ENCODE measurements at regions of chr11 and their contacts with region 1.

Region 1: GRCh38 chr11:72352859-72353551 is 81.3 kb downstream of the CLPB start:
- DNase-seq: peak; percentile 20

Region 2: DNA sequence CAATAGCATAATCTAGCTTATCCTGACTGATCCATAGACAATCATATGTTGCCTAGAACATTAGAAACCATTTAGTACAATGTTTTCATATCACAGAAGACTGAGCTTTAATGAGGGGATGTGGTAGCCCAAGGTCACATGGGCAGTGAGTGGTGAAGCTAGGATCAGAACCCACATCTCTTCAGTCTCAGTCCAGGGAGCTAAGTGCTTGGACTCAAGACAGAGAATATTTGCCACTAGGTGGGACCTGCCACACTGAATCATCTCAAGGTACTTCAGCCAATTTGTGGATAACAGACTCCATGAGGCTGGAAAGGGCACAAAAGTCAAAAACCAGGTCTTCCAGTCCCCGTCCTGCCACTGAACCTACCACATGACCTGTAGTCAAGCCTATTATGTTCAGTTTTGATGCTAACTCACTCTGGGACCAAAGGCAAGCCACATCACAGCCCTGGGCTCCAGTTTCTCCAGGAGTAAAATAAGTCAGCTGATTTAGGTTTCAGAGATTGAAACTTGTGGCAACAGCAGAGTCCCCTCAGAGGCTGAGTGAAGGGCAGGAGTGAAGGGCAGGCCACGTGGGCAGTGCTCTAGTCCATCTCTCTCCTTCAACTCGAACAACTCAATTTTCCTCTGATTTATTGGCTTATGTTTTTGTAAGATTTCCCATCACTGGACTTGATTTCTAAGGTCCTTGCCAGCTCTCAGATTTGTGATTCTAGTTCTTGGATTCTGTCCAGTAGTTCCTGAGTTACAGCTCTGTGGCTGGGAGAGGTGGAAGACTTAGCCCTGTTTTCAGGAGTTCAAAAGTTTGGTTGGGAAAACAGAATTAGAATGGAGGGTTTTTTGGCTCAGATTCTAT is 24.4 kb before region 1 on chr11:
- CTCF ChIA-PET with region 1: no interaction called
- POLR2A ChIA-PET with region 1: no interaction called
- DNase-seq: no peak

Region 3: GRCh38 chr11:72430741-72431570 is 78.0 kb after region 1 on chr11:
- CTCF ChIA-PET with region 1: interaction called, 15 read pairs
- POLR2A ChIA-PET with region 1: no interaction called
- DNase-seq: peak; percentile 63